ENCODE measurements at regions of chr1 and their contacts with region 1.

Region 1: DNA sequence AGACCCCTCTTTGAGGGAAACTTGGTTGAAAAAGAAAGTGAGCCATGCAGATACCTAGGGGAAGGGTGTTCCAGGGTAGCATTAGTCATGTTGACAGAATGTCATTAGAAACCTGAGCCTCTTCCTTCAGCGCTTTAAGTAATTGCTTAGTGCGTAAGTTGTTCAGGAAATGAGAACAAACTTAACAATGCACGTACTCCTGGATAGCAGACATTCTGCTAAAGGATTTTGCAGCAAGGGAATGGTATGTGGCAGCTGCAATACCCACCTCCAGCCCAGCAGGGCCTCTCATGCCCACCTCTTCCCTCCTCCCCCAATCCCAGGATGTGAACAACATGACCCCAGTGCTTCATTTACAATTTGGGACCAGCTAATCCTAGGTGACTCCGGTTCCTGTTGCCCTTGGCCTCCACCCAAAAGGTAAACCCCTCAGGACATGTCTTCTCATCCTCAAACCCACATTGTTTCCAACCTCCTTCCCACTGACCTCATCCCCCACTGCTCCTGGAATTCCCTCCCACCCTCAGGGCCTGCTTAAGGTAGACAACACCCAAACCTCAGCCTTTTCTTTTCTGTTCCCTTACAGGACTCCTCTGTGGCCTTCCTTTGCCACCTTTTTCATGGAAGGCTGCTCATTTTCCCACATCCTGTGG is 98.0 kb upstream of the BCAR3 start:
- DNase-seq: peak; percentile 100
- H3K4me3 Mint-ChIP-seq: peak overlapping the region; percentile 44
- H3K27ac Mint-ChIP-seq: peak overlapping the region; percentile 92
- H3K4me1 Mint-ChIP-seq: peaks cover 51% of the 10 kb centered on the region
- H3K27me3 Mint-ChIP-seq: no peaks in the 10 kb centered on the region
- CTCF ChIP-seq: no peak

Region 2: GRCh38 chr1:92701147-92701546 is 1078.5 kb before region 1 on chr1:
- CTCF ChIA-PET with region 1: no interaction called
- POLR2A ChIA-PET with region 1: no interaction called
- intact Hi-C with region 1: no loop called
- DNase-seq: no peak
- H3K4me3 Mint-ChIP-seq: no peak overlapping the region
- H3K27ac Mint-ChIP-seq: no peak overlapping the region
- H3K4me1 Mint-ChIP-seq: no peaks in the 10 kb centered on the region
- H3K27me3 Mint-ChIP-seq: no peaks in the 10 kb centered on the region
- CTCF ChIP-seq: no peak

Region 3: DNA sequence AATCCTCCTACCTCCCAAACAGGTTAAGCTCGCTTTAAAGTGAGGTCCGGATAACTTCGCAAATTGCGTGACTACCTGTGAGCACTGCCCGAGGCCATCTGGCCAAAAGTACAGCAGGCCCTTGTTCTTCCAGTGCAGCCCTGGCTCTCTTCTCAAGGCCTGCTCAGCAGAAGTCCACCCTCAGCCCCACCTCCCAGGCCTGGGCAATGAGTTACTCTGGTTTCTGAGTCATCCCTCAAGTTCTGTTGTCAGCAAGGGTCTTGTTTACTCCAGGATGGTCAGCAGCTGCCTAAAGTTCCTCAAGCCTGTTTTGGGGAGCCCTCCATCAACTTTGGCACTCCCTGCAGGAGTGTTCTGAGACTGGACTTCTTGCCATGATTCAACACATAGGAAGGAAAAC is 199.8 kb before region 1 on chr1:
- CTCF ChIA-PET with region 1: no interaction called
- POLR2A ChIA-PET with region 1: no interaction called
- intact Hi-C with region 1: no loop called
- DNase-seq: peak; percentile 45
- H3K4me3 Mint-ChIP-seq: no peak overlapping the region
- H3K27ac Mint-ChIP-seq: peak overlapping the region; percentile 71
- H3K4me1 Mint-ChIP-seq: peaks cover 16% of the 10 kb centered on the region
- H3K27me3 Mint-ChIP-seq: no peaks in the 10 kb centered on the region
- CTCF ChIP-seq: no peak

Region 4: GRCh38 chr1:93629099-93630059 is 150.3 kb before region 1 on chr1:
- CTCF ChIA-PET with region 1: interaction called, 11 read pairs
- POLR2A ChIA-PET with region 1: interaction called, 16 read pairs
- intact Hi-C with region 1: loop called (anchors 2 kb)
- DNase-seq: peak; percentile 76
- H3K4me3 Mint-ChIP-seq: peak overlapping the region; percentile 52
- H3K27ac Mint-ChIP-seq: peak overlapping the region; percentile 95
- H3K4me1 Mint-ChIP-seq: peaks cover 46% of the 10 kb centered on the region
- H3K27me3 Mint-ChIP-seq: no peaks in the 10 kb centered on the region
- CTCF ChIP-seq: peak; percentile 63

Region 5: GRCh38 chr1:93680757-93681550 is 98.7 kb before region 1 on chr1:
- CTCF ChIA-PET with region 1: interaction called, 12 read pairs
- POLR2A ChIA-PET with region 1: interaction called, 30 read pairs
- intact Hi-C with region 1: loop called (anchors 1 kb)
- DNase-seq: peak; percentile 91
- H3K4me3 Mint-ChIP-seq: peak overlapping the region; percentile 86
- H3K27ac Mint-ChIP-seq: peak overlapping the region; percentile 94
- H3K4me1 Mint-ChIP-seq: peaks cover 39% of the 10 kb centered on the region
- H3K27me3 Mint-ChIP-seq: no peaks in the 10 kb centered on the region
- CTCF ChIP-seq: peak; percentile 48

Region 6: DNA sequence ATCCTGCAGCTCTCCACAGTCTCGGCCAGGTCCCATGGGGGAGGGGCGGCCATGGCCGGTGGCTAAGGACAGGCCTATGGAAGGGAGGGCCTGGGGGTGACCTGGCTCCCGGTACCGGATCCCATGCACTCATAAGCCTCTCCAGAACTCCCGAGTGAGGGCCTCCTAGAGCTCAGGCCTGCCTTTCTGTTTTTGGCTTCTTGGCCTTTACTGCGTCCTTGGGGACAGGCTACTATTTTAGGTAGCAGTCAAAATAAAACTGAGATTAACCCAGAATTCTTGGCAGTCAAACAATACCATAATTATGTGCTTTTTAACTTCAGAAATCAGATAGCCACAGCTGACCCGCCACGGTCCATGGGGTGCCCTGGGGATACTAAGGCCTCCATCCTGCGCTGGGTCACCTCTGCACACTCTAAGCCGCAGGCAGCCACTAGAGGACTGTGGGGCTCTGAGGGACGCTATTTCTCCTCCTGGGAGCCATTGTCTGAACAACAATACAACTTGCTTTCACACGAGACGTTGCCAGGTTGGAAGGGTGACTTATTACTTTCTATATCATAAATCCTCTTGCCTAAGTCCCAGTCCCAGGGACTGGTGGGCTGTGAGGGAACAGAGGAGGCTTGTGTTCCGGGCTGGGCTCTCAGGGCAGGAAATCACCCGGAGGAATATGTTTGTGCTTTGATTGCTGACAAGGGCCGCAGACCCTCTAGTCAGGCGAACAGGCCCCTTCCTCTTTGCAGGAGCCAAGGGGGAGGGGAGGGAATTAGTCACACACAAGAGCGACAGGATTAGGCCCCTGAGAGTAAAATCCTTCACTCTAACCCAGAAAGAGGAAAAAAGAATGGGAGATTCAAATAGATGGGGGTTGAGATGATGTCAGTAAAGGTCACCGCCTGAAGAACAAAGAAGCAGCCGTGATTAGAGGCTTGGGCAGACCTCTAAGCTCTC is 57.3 kb before region 1 on chr1:
- CTCF ChIA-PET with region 1: no interaction called
- POLR2A ChIA-PET with region 1: no interaction called
- intact Hi-C with region 1: no loop called
- DNase-seq: no peak
- H3K4me3 Mint-ChIP-seq: no peak overlapping the region
- H3K27ac Mint-ChIP-seq: no peak overlapping the region
- H3K4me1 Mint-ChIP-seq: peaks cover 12% of the 10 kb centered on the region
- H3K27me3 Mint-ChIP-seq: no peaks in the 10 kb centered on the region
- CTCF ChIP-seq: no peak

Region 7: DNA sequence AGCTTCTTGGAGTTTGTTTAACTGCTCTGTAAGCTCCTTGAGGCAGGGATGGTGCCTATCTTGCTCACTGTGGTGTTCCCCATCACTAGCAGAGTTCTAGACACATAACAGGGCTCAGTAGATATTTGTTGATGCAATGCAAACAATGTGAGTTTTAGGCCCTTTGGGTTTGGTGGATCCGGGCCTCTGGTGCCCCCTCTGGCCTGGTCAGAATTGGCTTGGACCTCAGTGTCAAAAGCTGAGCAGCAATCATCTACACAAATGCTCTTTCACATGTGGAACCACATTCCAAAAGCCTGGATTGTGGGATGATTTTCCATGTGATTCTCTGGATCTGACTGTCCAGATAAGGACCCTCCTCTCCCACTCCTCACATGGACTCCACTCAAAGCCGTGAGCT is 44.7 kb before region 1 on chr1:
- CTCF ChIA-PET with region 1: no interaction called
- POLR2A ChIA-PET with region 1: interaction called, 3 read pairs
- intact Hi-C with region 1: loop called (anchors 2 kb)
- DNase-seq: no peak
- H3K4me3 Mint-ChIP-seq: no peak overlapping the region
- H3K27ac Mint-ChIP-seq: no peak overlapping the region
- H3K4me1 Mint-ChIP-seq: peaks cover 62% of the 10 kb centered on the region
- H3K27me3 Mint-ChIP-seq: no peaks in the 10 kb centered on the region
- CTCF ChIP-seq: peak; percentile 7

Region 8: GRCh38 chr1:93798301-93798700 is 18.6 kb after region 1 on chr1:
- CTCF ChIA-PET with region 1: interaction called, 3 read pairs
- POLR2A ChIA-PET with region 1: interaction called, 22 read pairs
- intact Hi-C with region 1: no loop called
- DNase-seq: peak; percentile 75
- H3K4me3 Mint-ChIP-seq: no peak overlapping the region
- H3K27ac Mint-ChIP-seq: peak overlapping the region; percentile 13
- H3K4me1 Mint-ChIP-seq: peaks cover 12% of the 10 kb centered on the region
- H3K27me3 Mint-ChIP-seq: no peaks in the 10 kb centered on the region
- CTCF ChIP-seq: no peak

Region 9: GRCh38 chr1:93878889-93879586 is 99.4 kb after region 1 on chr1 and contains the start of gene DNTTIP2:
- CTCF ChIA-PET with region 1: no interaction called
- POLR2A ChIA-PET with region 1: interaction called, 12 read pairs
- intact Hi-C with region 1: no loop called
- DNase-seq: peak; percentile 91
- H3K4me3 Mint-ChIP-seq: peak within 1 kb of the TSS; percentile 96
- H3K27ac Mint-ChIP-seq: peak within 1 kb of the TSS; percentile 99
- H3K4me1 Mint-ChIP-seq: peaks cover 27% of the 10 kb centered on the region
- H3K27me3 Mint-ChIP-seq: no peaks in the 10 kb centered on the region
- CTCF ChIP-seq: no peak
- total RNA-seq, gene DNTTIP2: 78.1 and 96.5 TPM in 2 replicates